Tibial artery (tissue), 4 donors: ENCODE measurements at regions of chr1 and their contacts with region 1.

Region 1: GRCh38 chr1:162561037-162561616 is 395 bp upstream of the UAP1 start:
- DNase-seq: peak; percentile 98 to 100
- H3K4me3 ChIP-seq: peak overlapping the region; percentile 73 to 95
- H3K27ac ChIP-seq: peak overlapping the region; percentile 96 to 97
- H3K4me1 ChIP-seq: peaks cover 0 to 27% (median 14%) of the 10 kb centered on the region in 4 donors
- H3K27me3 ChIP-seq: no peaks in the 10 kb centered on the region
- CTCF ChIP-seq: peak in 1 of 2 experiments; percentile 11

Region 2: GRCh38 chr1:162444903-162445302 is 116.2 kb before region 1 on chr1:
- intact Hi-C with region 1: no loop called
- DNase-seq: no peak
- H3K4me3 ChIP-seq: no peak overlapping the region
- H3K27ac ChIP-seq: no peak overlapping the region
- H3K4me1 ChIP-seq: no peaks in the 10 kb centered on the region
- H3K27me3 ChIP-seq: peaks cover 0 to 19% of the 10 kb centered on the region in 2 donors
- CTCF ChIP-seq: no peak

Region 3: GRCh38 chr1:162497723-162498500 is 63.2 kb before region 1 on chr1 and contains the start of gene UHMK1:
- intact Hi-C with region 1: loop called (anchors 5 kb)
- DNase-seq: peak; percentile 93 to 95
- H3K4me3 ChIP-seq: peak within 1 kb of the TSS; percentile 82 to 93
- H3K27ac ChIP-seq: peak within 1 kb of the TSS; percentile 89 to 94
- H3K4me1 ChIP-seq: peaks cover 0 to 26% (median 15%) of the 10 kb centered on the region in 4 donors
- H3K27me3 ChIP-seq: no peaks in the 10 kb centered on the region
- CTCF ChIP-seq: no peak

Region 4: GRCh38 chr1:162633081-162633762 is 72.1 kb after region 1 on chr1:
- intact Hi-C with region 1: loop called (anchors 5 kb)
- DNase-seq: peak in 1 of 2 donors; percentile 43
- H3K4me3 ChIP-seq: peak overlapping the region; percentile 58 to 59
- H3K27ac ChIP-seq: peak overlapping the region; percentile 83
- H3K4me1 ChIP-seq: peaks cover 0 to 54% (median 26%) of the 10 kb centered on the region in 4 donors
- H3K27me3 ChIP-seq: no peaks in the 10 kb centered on the region
- CTCF ChIP-seq: no peak

Region 5: DNA sequence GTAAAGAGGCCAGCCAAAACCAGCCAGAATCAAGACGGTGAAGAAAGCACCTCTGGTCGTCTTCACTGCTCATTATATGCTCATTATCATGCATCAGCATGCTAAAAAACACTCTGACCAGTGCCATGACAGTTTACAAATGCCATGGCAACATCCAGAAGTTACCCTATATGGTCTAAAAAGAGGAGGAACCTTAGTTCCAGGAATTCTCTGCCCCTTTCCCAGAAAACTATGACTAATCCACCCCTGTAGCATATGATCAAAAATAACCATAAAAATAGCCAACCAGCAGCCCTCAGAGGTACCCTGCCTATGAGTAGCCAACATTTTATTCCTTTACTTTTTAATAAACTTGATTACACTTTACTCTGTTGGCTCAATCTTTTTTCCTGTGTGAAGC is 1963.7 kb after region 1 on chr1:
- intact Hi-C with region 1: no loop called
- DNase-seq: no peak
- H3K4me3 ChIP-seq: no peak overlapping the region
- H3K27ac ChIP-seq: peak overlapping the region; percentile 39 to 49
- H3K4me1 ChIP-seq: peaks cover 0 to 16% (median 1%) of the 10 kb centered on the region in 4 donors
- H3K27me3 ChIP-seq: no peaks in the 10 kb centered on the region
- CTCF ChIP-seq: no peak